ENCODE measurements at regions of chr3 and their contacts with region 1.

Region 1: GRCh38 chr3:49723628-49724551 is at the start of gene GMPPB:
- DNase-seq: peak; percentile 96 to 99
- H3K4me3 ChIP-seq: peak within 1 kb of the TSS; percentile 91 to 97
- H3K27ac ChIP-seq: peak within 1 kb of the TSS; percentile 91 to 95
- H3K4me1 ChIP-seq: peaks cover 0 to 37% (median 32%) of the 10 kb centered on the region in 4 donors
- H3K27me3 ChIP-seq: no peaks in the 10 kb centered on the region
- CTCF ChIP-seq: no peak

Region 2: GRCh38 chr3:49786241-49786958 is 62.5 kb after region 1 on chr3 and contains the start of gene IP6K1:
- intact Hi-C with region 1: loop called (anchors 10 kb)
- DNase-seq: peak; percentile 100
- H3K4me3 ChIP-seq: peak within 1 kb of the TSS; percentile 80 to 97
- H3K27ac ChIP-seq: peak within 1 kb of the TSS; percentile 94 to 99
- H3K4me1 ChIP-seq: peaks cover 0 to 48% (median 29%) of the 10 kb centered on the region in 4 donors
- H3K27me3 ChIP-seq: no peaks in the 10 kb centered on the region
- CTCF ChIP-seq: peak in 1 of 2 experiments; percentile 27

Region 3: DNA sequence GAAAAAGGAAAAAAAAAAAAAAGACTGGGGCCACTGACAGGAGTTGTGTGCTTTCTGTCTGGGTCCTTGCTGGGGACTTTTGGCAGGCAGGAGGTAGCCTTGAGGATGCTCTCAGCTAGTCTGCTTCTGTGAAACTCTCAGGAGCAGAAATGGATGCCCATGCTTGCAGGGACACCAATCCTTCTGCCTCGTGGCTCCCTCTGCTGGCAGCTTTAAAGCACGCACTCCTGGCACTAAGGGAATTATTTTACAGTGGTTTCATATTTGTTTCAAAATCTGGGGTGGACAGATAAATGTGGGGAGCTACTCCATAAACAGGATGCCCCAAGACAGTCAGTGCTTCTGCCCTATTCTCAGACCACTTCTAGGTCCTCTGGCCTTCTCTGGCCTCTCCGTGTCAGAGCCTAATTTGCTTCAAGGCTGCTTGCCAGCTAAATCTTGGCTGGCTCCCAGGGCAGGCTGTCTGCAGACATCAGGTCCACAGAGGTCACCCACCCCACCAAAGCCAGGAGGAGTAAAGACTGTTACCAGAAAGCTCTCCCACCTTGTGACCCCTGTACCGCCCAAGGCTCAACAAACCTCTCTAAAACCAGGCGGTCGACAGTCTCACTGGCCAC is 115.4 kb after region 1 on chr3:
- intact Hi-C with region 1: no loop called
- DNase-seq: peak; percentile 85 to 86
- H3K4me3 ChIP-seq: no peak overlapping the region
- H3K27ac ChIP-seq: no peak overlapping the region
- H3K4me1 ChIP-seq: peaks cover 0 to 7% (median 1%) of the 10 kb centered on the region in 4 donors
- H3K27me3 ChIP-seq: no peaks in the 10 kb centered on the region
- CTCF ChIP-seq: peak; percentile 88 to 95